Right cardiac atrium (tissue), 5 donors: ENCODE measurements at regions of chr12 and their contacts with region 1.

Region 1: DNA sequence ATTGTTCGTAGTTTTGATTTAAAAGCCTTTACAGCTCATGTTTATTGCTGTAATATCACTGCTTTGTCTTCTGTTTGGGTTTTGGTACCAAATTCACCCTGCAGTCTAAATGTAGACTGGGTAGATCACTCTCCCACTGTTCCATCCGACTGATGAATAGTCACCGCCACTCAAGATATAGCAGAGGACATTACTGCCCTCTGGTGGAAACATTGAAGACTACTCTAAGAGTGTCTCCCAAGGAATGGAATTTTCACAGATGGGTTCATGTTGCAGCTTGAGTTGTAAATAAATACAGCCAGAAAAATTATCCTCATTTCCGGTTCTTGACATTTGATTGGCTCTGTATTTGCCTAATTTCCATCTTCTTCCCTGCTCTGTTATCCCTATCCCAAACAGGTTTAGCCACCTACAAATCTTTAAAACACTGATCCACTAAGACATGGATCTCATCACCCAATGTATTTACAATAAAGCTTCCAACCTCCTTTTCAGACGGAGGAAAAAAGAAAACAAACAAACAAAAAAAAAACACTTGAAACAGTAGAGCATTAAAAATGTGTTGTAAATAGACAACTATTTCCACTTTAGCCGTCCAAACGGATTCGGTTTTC is 198.3 kb upstream of the CPNE8 start:
- DNase-seq: no peak
- ATAC-seq: peak; percentile 91 to 96
- H3K4me3 ChIP-seq: no peak overlapping the region
- H3K27ac ChIP-seq: no peak overlapping the region
- H3K4me1 ChIP-seq: no peaks in the 10 kb centered on the region
- H3K27me3 ChIP-seq: no peaks in the 10 kb centered on the region

Region 2: DNA sequence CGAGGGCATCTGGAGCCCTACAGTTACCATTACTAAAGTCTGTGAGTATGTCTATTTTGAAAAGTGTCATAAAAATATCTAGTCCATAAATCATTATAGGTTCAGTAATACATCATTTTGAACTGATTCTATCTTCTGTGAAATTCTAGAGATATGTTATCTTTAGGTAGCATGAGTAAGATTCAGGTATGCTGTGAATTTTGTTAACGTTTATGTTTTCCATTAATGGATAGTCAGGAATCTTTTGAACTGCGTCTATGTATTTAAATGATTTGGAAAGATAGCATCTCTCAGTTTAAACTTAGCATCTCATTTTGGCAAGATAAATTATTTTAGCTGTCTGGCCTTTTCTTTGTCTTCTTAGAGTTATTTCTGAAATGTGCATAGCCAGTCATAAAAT is 778.8 kb before region 1 on chr12:
- intact Hi-C with region 1: loop called in 2 of 4 experiments (anchors 5 kb)
- DNase-seq: no peak
- ATAC-seq: no peak
- H3K4me3 ChIP-seq: no peak overlapping the region
- H3K27ac ChIP-seq: no peak overlapping the region
- H3K4me1 ChIP-seq: no peaks in the 10 kb centered on the region
- H3K27me3 ChIP-seq: no peaks in the 10 kb centered on the region

Region 3: GRCh38 chr12:38921025-38921677 is 182.5 kb before region 1 on chr12:
- intact Hi-C with region 1: loop called (anchors 2 to 10 kb)
- DNase-seq: peak in 2 of 3 donors; percentile 43 to 48
- ATAC-seq: peak; percentile 43 to 75
- H3K4me3 ChIP-seq: no peak overlapping the region
- H3K27ac ChIP-seq: no peak overlapping the region
- H3K4me1 ChIP-seq: no peaks in the 10 kb centered on the region
- H3K27me3 ChIP-seq: no peaks in the 10 kb centered on the region

Region 4: DNA sequence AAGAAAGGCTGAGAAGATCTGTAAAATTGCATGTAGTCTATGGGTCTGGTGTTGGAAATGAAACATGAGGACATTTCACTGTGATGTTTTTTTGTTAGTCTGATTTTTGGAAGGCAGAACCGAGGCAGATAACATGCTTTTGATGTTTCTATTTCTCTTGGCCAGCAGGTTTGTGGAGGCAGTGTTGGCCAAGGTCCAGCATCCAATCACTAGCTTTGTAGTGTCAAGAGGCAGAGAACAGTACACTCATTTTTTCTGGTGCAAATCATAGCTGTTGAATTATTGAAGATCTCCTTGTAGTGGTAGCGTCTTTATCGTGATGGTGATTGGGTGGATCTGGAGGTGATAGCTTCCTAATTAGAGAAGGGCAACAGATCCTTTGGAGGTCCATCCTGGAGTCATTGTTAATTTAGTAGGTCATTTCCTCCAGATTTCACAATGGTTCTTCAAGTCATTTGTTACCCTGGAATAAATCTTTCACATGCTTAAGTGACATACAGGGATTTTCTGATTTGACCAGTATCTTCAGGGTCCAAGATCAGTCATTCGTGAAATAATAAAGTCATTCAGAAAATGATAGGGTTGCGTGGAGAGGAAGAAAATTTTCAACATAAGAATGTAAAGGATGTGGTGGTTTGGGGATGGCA is 54.2 kb after region 1 on chr12:
- intact Hi-C with region 1: no loop called
- DNase-seq: peak in 1 of 3 donors; percentile 55
- ATAC-seq: peak; percentile 33 to 78
- H3K4me3 ChIP-seq: no peak overlapping the region
- H3K27ac ChIP-seq: no peak overlapping the region
- H3K4me1 ChIP-seq: no peaks in the 10 kb centered on the region
- H3K27me3 ChIP-seq: no peaks in the 10 kb centered on the region

Region 5: GRCh38 chr12:39329018-39329417 is 225.4 kb after region 1 on chr12:
- intact Hi-C with region 1: no loop called
- DNase-seq: no peak
- ATAC-seq: no peak
- H3K4me3 ChIP-seq: no peak overlapping the region
- H3K27ac ChIP-seq: no peak overlapping the region
- H3K4me1 ChIP-seq: no peaks in the 10 kb centered on the region
- H3K27me3 ChIP-seq: no peaks in the 10 kb centered on the region